K562 (cell line): ENCODE measurements at regions of chr19 and their contacts with region 1.

Region 1: GRCh38 chr19:54189735-54190502 is 539 bp upstream of the MBOAT7 start:
- DNase-seq: peak; percentile 86 to 100 (median 91)
- ATAC-seq: peak; percentile 75
- H3K4me3 ChIP-seq: peak overlapping the region; percentile 96
- H3K27ac ChIP-seq: peak overlapping the region; percentile 100
- H3K4me1 ChIP-seq: peaks cover 27 to 50% of the 10 kb centered on the region in 2 experiments
- H3K27me3 ChIP-seq: no peaks in the 10 kb centered on the region
- CTCF ChIP-seq: no peak
- EP300 ChIP-seq: no peak
- POLR2A ChIP-seq: peak; percentile 95
- RAD21 ChIP-seq: no peak

Region 2: GRCh38 chr19:54137086-54137921 is 52.6 kb before region 1 on chr19 and contains the start of gene CNOT3:
- CTCF ChIA-PET with region 1: no interaction called
- POLR2A ChIA-PET with region 1: interaction called, 10 read pairs
- in situ Hi-C with region 1: no loop called
- intact Hi-C with region 1: no loop called
- DNase-seq: peak; percentile 94 to 100 (median 97)
- ATAC-seq: peak; percentile 95
- H3K4me3 ChIP-seq: peak within 1 kb of the TSS; percentile 93
- H3K27ac ChIP-seq: peak within 1 kb of the TSS; percentile 97
- H3K4me1 ChIP-seq: peaks cover 14 to 23% of the 10 kb centered on the region in 2 experiments; a peak in 4 of 5 replicates
- H3K27me3 ChIP-seq: no peaks in the 10 kb centered on the region
- CTCF ChIP-seq: peak in 1 of 3 experiments; percentile 7; a peak in 1 of 6 replicates
- EP300 ChIP-seq: no peak
- POLR2A ChIP-seq: peak; percentile 82
- RAD21 ChIP-seq: no peak
- polyA plus RNA-seq, gene CNOT3: 0.27 to 0.46 TPM

Region 3: GRCh38 chr19:54168174-54168917 is 21.6 kb before region 1 on chr19:
- CTCF ChIA-PET with region 1: no interaction called
- POLR2A ChIA-PET with region 1: interaction called, 12 read pairs
- in situ Hi-C with region 1: no loop called
- intact Hi-C with region 1: no loop called
- DNase-seq: peak; percentile 86 to 94 (median 86)
- ATAC-seq: peak; percentile 89
- H3K4me3 ChIP-seq: no peak overlapping the region
- H3K27ac ChIP-seq: no peak overlapping the region
- H3K4me1 ChIP-seq: peaks cover 2 to 50% of the 10 kb centered on the region in 2 experiments; a peak in 2 of 5 replicates
- H3K27me3 ChIP-seq: no peaks in the 10 kb centered on the region
- CTCF ChIP-seq: peak; percentile 83 to 94 (median 88)
- EP300 ChIP-seq: no peak
- POLR2A ChIP-seq: no peak
- RAD21 ChIP-seq: peak; percentile 56 to 83

Region 4: DNA sequence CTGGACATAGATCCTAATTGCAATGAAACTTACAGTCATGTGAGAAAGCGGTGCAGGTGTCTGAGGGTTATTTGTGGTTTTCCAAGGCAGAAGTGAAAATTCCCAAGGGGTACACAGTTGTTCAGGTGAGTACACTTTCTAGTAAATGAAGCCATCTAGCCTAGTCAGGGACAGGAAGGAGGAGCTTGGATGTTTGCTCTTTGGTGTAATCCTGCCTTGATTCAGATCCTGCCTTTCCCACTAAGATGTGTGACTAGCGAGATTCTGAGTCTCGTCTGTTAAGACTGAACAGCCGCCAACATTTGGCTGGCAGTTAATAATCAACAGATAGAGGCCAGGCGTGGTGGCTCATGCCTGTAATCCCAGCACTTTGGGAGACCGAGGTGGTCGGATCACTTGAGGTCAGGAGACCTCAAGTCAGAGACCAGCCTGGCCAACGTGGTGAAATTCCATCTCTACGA is 13.3 kb after region 1 on chr19:
- CTCF ChIA-PET with region 1: interaction called, 4 read pairs
- POLR2A ChIA-PET with region 1: interaction called, 206 read pairs
- in situ Hi-C with region 1: no loop called
- intact Hi-C with region 1: loop called (anchors 2 kb)
- DNase-seq: no peak
- ATAC-seq: no peak
- H3K4me3 ChIP-seq: peak overlapping the region; percentile 68
- H3K27ac ChIP-seq: peak overlapping the region; percentile 70
- H3K4me1 ChIP-seq: peaks cover 42 to 51% of the 10 kb centered on the region in 2 experiments
- H3K27me3 ChIP-seq: no peaks in the 10 kb centered on the region
- CTCF ChIP-seq: no peak
- EP300 ChIP-seq: no peak
- POLR2A ChIP-seq: 0 out of 2 replicates have a peak, but pooled peaks have one; percentile 49
- RAD21 ChIP-seq: no peak

Region 5: DNA sequence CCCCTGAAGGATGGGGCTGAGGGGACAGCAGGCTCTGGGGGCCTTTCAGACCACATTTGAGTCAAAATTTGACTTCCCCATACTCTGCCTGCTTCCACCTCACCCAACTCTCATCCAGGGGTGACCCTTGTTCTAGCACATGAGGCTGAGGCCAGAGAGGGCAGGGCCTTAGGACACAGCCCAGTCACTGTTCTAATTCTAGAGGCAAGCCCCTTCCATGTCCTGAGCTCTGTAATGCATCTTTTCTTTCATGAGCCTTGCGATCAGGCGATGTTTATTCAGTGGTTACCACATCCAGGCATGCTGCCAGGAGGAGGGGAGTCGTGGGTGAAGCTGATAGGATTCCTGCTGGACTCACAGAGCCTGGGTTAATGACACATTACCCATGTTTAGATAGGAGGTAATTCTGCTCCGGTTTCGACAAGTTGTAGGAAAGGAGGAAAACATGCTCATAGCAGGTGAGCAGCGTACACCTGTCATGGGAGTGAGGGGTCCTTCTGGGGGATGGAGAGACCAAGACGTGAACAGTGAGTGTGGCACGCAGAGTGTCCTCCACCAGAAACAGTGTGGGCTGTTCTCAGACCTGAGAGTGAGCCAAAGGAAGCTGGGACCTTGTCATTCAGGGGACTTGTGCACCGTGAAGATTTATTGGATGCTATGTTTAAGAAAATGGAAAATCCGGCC is 20.0 kb after region 1 on chr19:
- CTCF ChIA-PET with region 1: interaction called, 4 read pairs
- POLR2A ChIA-PET with region 1: interaction called, 18 read pairs
- in situ Hi-C with region 1: no loop called
- intact Hi-C with region 1: loop called (anchors 2 kb)
- DNase-seq: peak; percentile 66 to 96 (median 74)
- ATAC-seq: peak; percentile 63
- H3K4me3 ChIP-seq: no peak overlapping the region
- H3K27ac ChIP-seq: peak overlapping the region; percentile 89
- H3K4me1 ChIP-seq: peaks cover 65 to 76% of the 10 kb centered on the region in 2 experiments
- H3K27me3 ChIP-seq: no peaks in the 10 kb centered on the region
- CTCF ChIP-seq: no peak
- EP300 ChIP-seq: peak; percentile 84
- POLR2A ChIP-seq: no peak
- RAD21 ChIP-seq: no peak; a peak in 1 of 4 replicates

Region 6: GRCh38 chr19:54231077-54231931 is 41.4 kb after region 1 on chr19:
- CTCF ChIA-PET with region 1: no interaction called
- POLR2A ChIA-PET with region 1: no interaction called
- in situ Hi-C with region 1: no loop called
- intact Hi-C with region 1: loop called (anchors 5 kb)
- DNase-seq: peak; percentile 82 to 92 (median 89)
- ATAC-seq: peak; percentile 100
- H3K4me3 ChIP-seq: no peak overlapping the region
- H3K27ac ChIP-seq: no peak overlapping the region
- H3K4me1 ChIP-seq: peaks cover 4 to 6% of the 10 kb centered on the region in 2 experiments; a peak in 4 of 5 replicates
- H3K27me3 ChIP-seq: peaks cover 10 to 33% of the 10 kb centered on the region in 2 experiments; a peak in 4 of 5 replicates
- CTCF ChIP-seq: peak; percentile 98 to 99 (median 99)
- EP300 ChIP-seq: peak; percentile 38; the same call in 1 of the 2 replicates
- POLR2A ChIP-seq: no peak
- RAD21 ChIP-seq: peak; percentile 93 to 98

Region 7: DNA sequence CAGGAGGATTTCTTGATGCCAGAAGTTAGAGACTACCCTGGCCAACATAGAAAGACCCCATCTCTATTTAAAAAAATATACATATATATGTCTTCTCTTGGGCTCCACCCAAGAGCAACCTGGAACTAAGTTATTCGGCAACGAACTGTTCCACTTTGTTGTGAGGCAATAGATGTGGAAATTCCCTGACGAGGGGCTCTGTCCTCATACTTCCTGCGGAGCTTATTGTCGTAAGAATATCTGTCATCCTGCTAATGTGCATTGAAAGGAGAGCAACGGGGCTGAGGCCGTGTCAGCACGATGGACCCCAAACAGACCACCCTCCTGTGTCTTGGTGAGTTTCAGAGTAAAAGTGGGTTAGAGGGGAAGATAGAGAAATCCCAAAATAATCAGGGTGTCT is 684.1 kb after region 1 on chr19 and contains the start of gene FCAR:
- CTCF ChIA-PET with region 1: no interaction called
- POLR2A ChIA-PET with region 1: no interaction called
- in situ Hi-C with region 1: no loop called
- intact Hi-C with region 1: no loop called
- DNase-seq: no peak
- ATAC-seq: no peak
- H3K4me3 ChIP-seq: no peak within 1 kb of the TSS
- H3K27ac ChIP-seq: no peak within 1 kb of the TSS
- H3K4me1 ChIP-seq: no peaks in the 10 kb centered on the region
- H3K27me3 ChIP-seq: peaks cover 18 to 26% of the 10 kb centered on the region in 2 experiments
- CTCF ChIP-seq: no peak
- EP300 ChIP-seq: no peak
- POLR2A ChIP-seq: no peak
- RAD21 ChIP-seq: no peak
- polyA plus RNA-seq, gene FCAR: not detected